Activated CD4-positive, alpha-beta memory T cell treated with anti-CD3 and anti-CD28 coated beads, Interleukin-2, amount 10 ng/mL, durations not matched to agents 7 days and 5 days (primary cell): ENCODE measurements at regions of chr1 and their contacts with region 1.

Region 1: DNA sequence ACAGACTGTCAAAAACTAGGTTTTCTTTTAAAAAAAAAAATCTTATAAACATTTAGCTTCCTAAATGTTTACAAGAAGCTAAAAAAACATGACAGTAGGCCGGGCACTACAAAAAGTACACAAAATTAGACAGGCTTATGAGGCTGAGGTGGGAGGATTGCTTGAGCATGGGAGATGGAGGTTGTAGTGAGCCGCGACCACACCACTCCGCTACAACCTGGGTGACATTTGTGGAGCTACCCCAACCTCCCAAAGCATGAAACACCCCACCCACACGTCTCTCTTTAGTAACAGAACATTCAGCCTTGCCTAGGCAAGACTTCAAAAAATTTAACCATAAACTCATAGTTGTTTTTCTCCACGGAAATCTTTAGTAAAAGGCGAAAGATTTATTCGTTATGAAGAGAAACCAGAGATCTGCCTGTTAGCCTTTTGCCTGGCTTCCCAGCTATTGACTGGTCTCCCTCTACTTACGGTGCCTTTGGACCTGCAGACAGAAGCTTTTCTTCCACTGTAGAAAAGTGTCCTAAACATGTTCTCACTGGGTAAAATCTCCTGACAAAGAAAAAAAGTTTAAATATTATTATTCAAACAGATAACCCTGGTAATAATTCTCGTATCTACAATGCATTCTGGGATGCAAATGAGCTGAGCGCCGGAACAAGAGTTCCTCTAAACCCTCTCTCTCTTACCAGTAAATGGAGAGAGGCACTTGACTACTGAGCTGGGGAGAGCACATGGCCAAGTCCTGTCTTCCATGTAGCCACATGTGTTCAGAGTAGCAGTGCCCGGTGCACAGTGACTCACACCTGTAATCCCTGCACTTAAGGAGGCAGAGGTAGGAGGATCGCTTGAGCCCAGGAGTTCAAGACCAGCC is 9.2 kb downstream of the RNU5D-1 start:
- DNase-seq: peak; percentile 87
- H3K4me3 Mint-ChIP-seq: peak overlapping the region; percentile 52
- H3K27ac Mint-ChIP-seq: peak overlapping the region; percentile 94
- H3K4me1 Mint-ChIP-seq: peaks cover 71% of the 10 kb centered on the region
- H3K27me3 Mint-ChIP-seq: no peaks in the 10 kb centered on the region

Region 2: GRCh38 chr1:44135886-44136285 is 585.8 kb before region 1 on chr1:
- CTCF ChIA-PET with region 1: no interaction called
- POLR2A ChIA-PET with region 1: no interaction called
- DNase-seq: no peak
- H3K4me3 Mint-ChIP-seq: no peak overlapping the region
- H3K27ac Mint-ChIP-seq: no peak overlapping the region
- H3K4me1 Mint-ChIP-seq: no peaks in the 10 kb centered on the region
- H3K27me3 Mint-ChIP-seq: peaks cover 11% of the 10 kb centered on the region

Region 3: DNA sequence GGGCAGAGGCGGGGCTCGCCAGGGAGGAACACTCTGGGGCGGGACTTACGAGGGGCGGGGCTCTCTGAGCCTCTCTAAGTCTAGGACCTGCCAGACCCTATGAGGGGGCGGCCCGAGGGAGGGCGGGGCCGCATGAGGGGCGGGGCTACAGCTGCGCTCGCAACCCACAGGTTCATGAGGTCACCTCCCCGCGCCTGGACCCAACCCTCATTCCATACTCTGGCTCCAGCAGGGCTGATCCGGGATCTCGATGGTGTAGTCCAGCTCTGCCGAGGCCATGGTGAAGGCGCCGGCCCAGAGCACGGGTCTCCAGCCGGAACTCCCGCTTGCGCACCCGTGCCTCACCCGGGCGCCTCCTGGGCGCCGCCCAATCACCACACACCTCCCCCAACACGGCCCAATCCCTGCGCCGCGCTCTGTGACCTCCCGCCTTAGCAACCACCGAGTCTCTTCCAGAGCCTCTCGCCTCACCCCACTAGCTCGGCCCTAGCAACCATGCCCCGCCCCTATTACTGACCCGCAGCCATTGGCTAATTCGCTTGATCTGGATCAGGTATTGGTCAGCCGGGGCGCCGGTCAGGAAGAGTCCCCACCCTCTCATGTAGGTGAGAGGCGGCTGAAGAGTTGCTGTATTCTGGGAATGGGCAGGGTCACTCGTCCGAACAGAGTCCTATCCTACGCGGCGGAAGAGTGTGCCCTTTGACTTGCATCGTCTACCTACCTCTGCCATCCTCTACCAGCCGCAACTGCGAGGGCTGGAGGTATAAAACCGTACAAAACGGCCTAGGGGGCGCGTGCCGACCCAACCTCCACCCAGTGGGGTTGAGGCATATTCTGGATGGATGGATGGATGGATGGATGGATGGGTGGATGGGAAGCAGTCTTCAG is 47.4 kb before region 1 on chr1 and contains the starts of genes ARMH1 and TMEM53:
- CTCF ChIA-PET with region 1: no interaction called
- POLR2A ChIA-PET with region 1: interaction called, 59 read pairs
- DNase-seq: peak; percentile 99
- H3K4me3 Mint-ChIP-seq: peak within 1 kb of the TSS; percentile 83
- H3K27ac Mint-ChIP-seq: peak within 1 kb of the TSS; percentile 79
- H3K4me1 Mint-ChIP-seq: peaks cover 32% of the 10 kb centered on the region
- H3K27me3 Mint-ChIP-seq: no peaks in the 10 kb centered on the region
- total RNA-seq, gene ARMH1: 20.8 to 21.2 TPM
- total RNA-seq, gene TMEM53: 4.3 to 5.6 TPM

Region 4: DNA sequence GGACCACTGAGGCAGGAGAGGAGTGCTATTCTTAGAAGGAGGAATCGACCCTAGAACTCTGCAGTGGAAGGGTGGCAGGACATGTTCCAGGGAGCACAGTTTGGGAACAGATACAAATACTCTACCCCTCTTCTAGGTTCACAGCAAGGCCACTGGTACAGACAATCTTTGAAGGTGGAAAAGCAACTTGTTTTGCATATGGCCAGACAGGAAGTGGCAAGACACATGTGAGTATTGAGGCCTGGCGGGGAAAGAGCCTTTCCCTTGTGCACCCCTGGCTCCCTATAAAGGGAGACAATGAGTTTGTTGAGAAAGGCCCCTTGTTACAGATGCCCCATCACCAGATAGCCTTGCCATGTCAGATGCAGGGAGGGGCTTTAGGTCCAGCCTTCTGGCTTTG is 35.7 kb after region 1 on chr1:
- CTCF ChIA-PET with region 1: no interaction called
- POLR2A ChIA-PET with region 1: interaction called, 13 read pairs
- DNase-seq: no peak
- H3K4me3 Mint-ChIP-seq: no peak overlapping the region
- H3K27ac Mint-ChIP-seq: peak overlapping the region; percentile 31
- H3K4me1 Mint-ChIP-seq: peaks cover 8% of the 10 kb centered on the region
- H3K27me3 Mint-ChIP-seq: no peaks in the 10 kb centered on the region

Region 5: GRCh38 chr1:44812822-44813543 is 91.3 kb after region 1 on chr1:
- CTCF ChIA-PET with region 1: interaction called, 5 read pairs
- POLR2A ChIA-PET with region 1: interaction called, 330 read pairs
- DNase-seq: no peak
- H3K4me3 Mint-ChIP-seq: peak overlapping the region; percentile 83
- H3K27ac Mint-ChIP-seq: peak overlapping the region; percentile 98
- H3K4me1 Mint-ChIP-seq: peaks cover 70% of the 10 kb centered on the region
- H3K27me3 Mint-ChIP-seq: no peaks in the 10 kb centered on the region

Region 6: DNA sequence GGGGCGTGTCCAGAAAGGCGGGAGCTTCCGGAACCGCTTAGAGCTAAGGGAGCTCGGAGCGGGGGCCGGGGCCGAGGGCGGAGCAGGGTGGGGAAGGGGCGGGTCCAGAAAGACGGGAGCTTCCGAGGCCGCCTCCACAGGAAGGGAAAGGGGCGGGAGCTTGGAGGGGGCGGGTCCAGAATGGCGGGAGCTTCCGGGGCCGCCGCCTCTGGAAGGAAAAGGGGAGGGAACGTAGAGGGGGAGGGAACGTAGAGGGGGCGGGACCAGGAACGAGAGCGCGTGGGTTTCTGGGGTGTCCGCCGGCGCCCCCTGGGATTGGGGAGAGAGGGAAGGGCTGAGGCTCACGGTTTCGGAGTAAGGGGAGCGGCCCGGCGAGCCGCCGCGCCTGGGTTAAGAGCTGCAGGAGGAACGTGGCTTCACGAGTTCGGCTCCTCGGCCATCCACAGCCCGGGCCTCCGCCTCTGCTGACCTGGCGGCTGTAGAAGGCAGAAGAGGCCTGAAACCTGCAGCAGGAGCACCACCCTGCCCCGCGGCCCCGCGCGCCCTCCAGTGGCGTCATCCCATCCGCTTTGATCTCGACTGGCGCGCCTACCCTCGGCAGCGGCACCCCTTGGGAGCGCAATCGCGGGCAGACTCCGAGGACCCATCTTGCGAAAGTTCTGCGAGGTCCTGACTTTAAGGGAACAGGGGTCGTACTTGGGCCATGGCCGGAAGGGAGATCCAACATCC is 582.0 kb after region 1 on chr1:
- CTCF ChIA-PET with region 1: no interaction called
- POLR2A ChIA-PET with region 1: interaction called, 16 read pairs
- DNase-seq: peak; percentile 99
- H3K4me3 Mint-ChIP-seq: peak overlapping the region; percentile 83
- H3K27ac Mint-ChIP-seq: peak overlapping the region; percentile 86
- H3K4me1 Mint-ChIP-seq: peaks cover 44% of the 10 kb centered on the region
- H3K27me3 Mint-ChIP-seq: no peaks in the 10 kb centered on the region

Region 7: DNA sequence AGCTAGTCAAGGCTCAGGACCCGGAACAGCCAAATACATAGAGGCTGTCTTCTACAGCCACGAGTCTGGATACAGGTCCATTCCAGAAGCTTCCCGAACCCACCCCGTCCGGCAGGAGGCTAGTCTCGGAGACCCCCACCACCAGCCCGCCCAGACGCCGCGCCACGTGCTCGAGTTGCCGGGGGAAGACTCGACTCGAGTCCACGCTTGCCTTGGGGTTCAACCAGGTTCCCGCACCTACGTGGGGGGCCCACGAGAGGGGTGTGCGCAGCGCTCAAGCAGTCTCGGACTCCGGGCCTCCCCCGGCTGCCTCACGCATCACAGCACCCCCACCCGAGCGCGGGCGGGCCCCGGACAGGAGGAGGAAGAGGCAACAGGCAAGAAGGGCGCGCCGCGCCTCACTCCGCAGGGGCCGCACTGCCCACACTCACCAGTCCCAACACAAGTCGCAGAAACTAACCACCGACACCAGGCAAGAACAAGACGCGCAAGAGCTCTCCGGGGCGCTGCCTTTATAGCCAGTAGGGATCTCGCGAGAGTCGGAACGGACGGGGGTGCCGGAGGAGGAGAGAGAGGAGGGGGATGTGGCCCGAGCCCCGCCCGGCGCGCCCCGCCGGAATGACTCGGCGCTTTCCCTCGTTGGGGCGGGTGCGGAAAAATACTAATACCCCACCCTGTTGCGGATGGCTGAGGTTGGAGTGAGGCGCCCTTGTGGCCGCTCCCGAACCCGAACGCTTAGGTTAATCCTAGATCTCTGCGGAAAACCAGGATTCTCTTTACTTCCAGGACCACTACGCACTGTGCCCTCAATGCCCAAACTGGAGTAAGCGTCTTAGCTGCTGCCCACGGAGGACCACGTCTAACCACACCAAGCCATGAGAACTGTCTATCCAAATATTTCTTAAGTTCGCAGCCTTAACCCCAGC is 799.9 kb after region 1 on chr1 and contains the start of gene PRDX1:
- CTCF ChIA-PET with region 1: no interaction called
- POLR2A ChIA-PET with region 1: interaction called, 10 read pairs
- DNase-seq: peak; percentile 97
- H3K4me3 Mint-ChIP-seq: peak within 1 kb of the TSS; percentile 95
- H3K27ac Mint-ChIP-seq: peak within 1 kb of the TSS; percentile 88
- H3K4me1 Mint-ChIP-seq: peaks cover 49% of the 10 kb centered on the region
- H3K27me3 Mint-ChIP-seq: peaks cover 10% of the 10 kb centered on the region
- total RNA-seq, gene PRDX1: 296 to 309 TPM